Aorta (tissue), 5 donors: ENCODE measurements at regions of chr10 and their contacts with region 1.

Region 1: DNA sequence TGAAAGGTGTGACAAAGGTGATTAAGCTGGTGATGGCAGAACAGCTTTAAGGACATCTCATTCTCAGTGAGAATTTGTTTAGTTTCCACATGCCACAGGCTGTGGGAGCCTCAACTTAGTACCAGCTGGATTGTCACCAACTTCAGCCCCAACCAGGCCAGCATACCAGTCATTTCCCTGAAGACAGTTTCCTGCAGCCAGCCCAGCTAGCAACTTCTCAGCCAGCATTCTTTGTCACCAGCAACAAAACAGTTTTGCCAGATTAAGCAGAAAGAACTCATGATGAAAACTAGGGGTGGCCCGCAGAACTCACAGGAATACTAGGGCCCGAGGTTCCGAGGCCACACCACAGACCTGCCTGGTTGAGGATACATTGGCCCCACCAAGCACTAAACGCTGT is 68.8 kb upstream of the UNC5B start:
- DNase-seq: peak in 1 of 2 donors; percentile 74
- ATAC-seq: no peak
- H3K4me3 ChIP-seq: no peak overlapping the region
- H3K27ac ChIP-seq: peak overlapping the region in 1 of 2 donors; percentile 34
- H3K4me1 ChIP-seq: peaks cover 2 to 3% of the 10 kb centered on the region in 2 donors
- H3K27me3 ChIP-seq: no peaks in the 10 kb centered on the region

Region 2: GRCh38 chr10:71068861-71069271 is 74.7 kb before region 1 on chr10:
- intact Hi-C with region 1: loop called in 1 of 2 experiments (anchors 5 kb)
- DNase-seq: peak; percentile 84 to 90
- ATAC-seq: peak; percentile 67
- H3K4me3 ChIP-seq: no peak overlapping the region
- H3K27ac ChIP-seq: peak overlapping the region; percentile 20 to 73
- H3K4me1 ChIP-seq: no peaks in the 10 kb centered on the region
- H3K27me3 ChIP-seq: no peaks in the 10 kb centered on the region

Region 3: GRCh38 chr10:71085689-71086438 is 57.7 kb before region 1 on chr10:
- intact Hi-C with region 1: loop called in 1 of 2 experiments (anchors 5 kb)
- DNase-seq: peak; percentile 54 to 61
- ATAC-seq: no peak
- H3K4me3 ChIP-seq: no peak overlapping the region
- H3K27ac ChIP-seq: no peak overlapping the region
- H3K4me1 ChIP-seq: no peaks in the 10 kb centered on the region
- H3K27me3 ChIP-seq: no peaks in the 10 kb centered on the region